Head of caudate nucleus (tissue), 42 donors: ENCODE measurements at regions of chr20 and their contacts with region 1.

Region 1: GRCh38 chr20:62237801-62238571 is at the start of gene OSBPL2:
- DNase-seq: peak; percentile 98 to 100 (median 100)

Region 2: DNA sequence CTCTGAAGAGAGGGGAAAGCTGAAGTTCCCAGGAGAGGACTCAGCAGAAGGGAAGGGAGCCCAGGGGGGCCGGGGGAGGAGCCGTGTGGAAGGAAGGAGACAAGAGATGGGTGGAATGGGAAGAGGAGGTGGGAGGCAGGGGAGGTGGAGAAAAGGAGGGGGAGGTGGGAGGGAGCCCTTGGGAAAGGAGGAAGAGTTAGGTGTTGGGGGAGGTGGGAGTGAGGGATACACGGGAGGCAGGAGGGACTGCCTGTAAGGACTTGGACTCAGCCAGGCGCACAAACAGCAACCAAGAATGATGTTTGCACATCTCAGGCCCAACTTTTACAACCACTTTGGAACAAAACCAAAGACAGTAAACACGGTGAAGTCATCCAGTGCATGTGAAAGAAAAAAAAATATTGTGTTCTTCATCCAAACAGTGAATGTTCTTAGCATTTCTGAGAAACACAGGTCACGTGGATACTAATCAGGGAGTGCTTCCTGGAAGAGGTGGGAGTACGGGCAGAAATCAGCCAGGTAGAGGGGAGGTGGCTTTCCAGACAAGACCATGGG is 133.1 kb before region 1 on chr20:
- intact Hi-C with region 1: no loop called
- DNase-seq: no peak

Region 3: DNA sequence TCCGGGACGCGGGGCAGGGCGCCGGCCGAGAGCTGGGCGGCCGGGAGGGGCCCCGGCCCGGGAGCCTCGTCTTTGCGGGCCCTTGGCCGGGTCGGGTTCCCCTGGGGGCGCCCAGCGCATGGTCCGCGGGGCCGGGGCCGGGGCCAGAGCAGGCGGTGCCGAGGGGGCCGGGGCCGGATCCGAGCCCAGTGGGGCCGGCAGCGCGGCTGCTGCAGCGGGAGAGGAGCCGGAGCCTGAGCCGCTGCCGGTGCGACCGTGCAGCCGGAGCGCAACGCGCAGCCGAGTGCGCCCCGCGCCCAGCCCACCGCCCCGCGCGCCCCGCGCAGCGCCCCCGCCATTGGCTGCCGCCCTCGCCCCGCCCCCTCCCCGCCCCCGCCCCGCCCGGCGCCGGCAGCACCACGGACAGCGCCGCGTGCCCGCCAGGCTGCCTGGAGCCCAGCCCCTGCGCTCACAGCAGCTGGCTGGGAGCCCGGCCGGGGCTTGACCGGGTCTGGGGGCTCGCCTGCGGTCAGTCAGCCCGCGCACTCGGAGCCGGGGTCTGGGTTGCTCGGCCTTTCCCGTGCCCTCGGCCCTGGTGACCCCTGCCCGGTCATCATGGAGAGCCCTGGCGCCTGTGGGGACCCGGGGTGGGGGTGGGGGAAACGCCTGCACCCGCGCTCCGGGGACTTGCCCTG is 17.9 kb before region 1 on chr20 and contains the start of gene HRH3:
- intact Hi-C with region 1: loop called (anchors 2 kb)
- DNase-seq: peak in 9 of 42 donors; percentile 38 to 65 (median 55)